Panc1 (cell line): ENCODE measurements at regions of chr3 and their contacts with region 1.

Region 1: GRCh38 chr3:29870136-29870535 is 589.3 kb downstream of the RBMS3 start:
- DNase-seq: no peak
- ATAC-seq: no peak
- H3K4me3 ChIP-seq: no peak overlapping the region
- H3K27ac ChIP-seq: no peak overlapping the region
- H3K4me1 ChIP-seq: no peaks in the 10 kb centered on the region
- H3K27me3 ChIP-seq: no peaks in the 10 kb centered on the region
- CTCF ChIP-seq: no peak

Region 2: DNA sequence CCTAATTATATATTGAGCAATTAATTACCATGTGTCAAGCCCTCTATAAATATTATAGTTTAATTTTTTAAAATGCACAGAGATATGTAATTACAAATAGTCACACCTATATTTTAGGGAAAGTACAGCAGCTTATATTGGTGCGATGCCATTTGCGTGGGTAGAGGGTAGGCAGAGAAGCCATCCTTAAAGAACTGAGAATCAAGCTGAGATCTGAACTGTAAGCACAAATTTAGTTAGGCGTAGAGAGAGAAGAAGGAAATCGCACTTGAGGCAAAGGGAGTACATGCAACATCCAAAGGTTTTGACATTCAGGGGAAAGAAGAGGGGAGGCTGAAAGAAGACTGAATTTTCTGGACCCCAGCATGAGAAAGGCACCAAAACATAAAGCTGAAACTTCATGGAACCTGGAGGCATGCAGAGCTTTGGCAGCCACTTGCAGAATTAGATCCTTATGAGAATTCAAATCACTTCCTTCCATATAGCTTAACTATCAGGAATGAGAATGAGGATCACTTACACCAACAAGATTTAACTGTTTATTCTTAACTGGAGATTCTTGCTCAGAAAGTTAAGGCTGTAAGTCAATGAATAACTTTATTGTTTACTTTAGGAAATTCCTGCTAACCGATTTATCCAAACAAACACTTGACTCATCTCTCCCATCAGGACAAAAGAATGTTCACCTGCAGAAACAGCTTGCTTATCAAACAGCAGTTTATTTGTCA is 850.6 kb after region 1 on chr3:
- CTCF ChIA-PET with region 1: no interaction called
- POLR2A ChIA-PET with region 1: no interaction called
- in situ Hi-C with region 1: no loop called
- intact Hi-C with region 1: no loop called
- DNase-seq: peak; percentile 77
- ATAC-seq: peak; percentile 94
- H3K4me3 ChIP-seq: no peak overlapping the region
- H3K27ac ChIP-seq: peak overlapping the region; percentile 93
- H3K4me1 ChIP-seq: peaks cover 12% of the 10 kb centered on the region
- H3K27me3 ChIP-seq: no peaks in the 10 kb centered on the region
- CTCF ChIP-seq: no peak

Region 3: DNA sequence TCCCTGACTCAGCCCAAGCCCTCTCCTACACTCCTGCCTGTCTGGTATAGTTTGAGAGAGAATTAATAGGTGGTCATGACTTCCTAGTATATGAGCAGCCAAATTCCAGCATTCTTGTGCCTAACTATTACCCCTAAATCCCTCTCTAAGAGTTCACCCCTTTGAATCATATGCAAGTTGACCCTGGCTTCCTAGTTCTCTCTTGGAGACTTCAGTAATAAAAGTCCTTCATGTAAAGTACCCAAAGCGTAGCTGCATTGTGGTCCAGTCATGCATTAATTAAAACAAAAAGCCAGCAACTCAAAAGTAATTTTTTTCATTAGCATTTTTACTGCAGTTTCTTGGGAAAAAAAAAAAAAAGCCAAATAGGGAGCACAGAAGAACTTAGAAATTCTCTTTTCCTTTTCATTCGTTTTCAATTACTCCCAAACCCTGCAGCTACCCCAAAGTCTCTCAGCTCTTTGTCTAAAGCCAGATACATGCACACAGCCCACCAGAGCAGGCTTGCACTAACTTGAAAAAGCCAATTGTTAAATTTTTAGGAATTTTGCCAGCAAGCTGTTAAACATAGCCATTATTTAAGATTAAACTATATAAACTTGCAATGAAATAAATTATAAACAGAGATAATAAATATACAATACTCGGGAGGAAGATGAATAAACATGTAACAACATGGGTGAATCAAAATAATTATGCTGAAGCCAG is 1612.5 kb after region 1 on chr3:
- CTCF ChIA-PET with region 1: no interaction called
- POLR2A ChIA-PET with region 1: interaction called, 11 read pairs
- in situ Hi-C with region 1: no loop called
- intact Hi-C with region 1: no loop called
- DNase-seq: no peak
- ATAC-seq: no peak
- H3K4me3 ChIP-seq: no peak overlapping the region
- H3K27ac ChIP-seq: no peak overlapping the region
- H3K4me1 ChIP-seq: no peaks in the 10 kb centered on the region
- H3K27me3 ChIP-seq: no peaks in the 10 kb centered on the region
- CTCF ChIP-seq: no peak